ENCODE measurements at regions of chr11 and their contacts with region 1.

Region 1: DNA sequence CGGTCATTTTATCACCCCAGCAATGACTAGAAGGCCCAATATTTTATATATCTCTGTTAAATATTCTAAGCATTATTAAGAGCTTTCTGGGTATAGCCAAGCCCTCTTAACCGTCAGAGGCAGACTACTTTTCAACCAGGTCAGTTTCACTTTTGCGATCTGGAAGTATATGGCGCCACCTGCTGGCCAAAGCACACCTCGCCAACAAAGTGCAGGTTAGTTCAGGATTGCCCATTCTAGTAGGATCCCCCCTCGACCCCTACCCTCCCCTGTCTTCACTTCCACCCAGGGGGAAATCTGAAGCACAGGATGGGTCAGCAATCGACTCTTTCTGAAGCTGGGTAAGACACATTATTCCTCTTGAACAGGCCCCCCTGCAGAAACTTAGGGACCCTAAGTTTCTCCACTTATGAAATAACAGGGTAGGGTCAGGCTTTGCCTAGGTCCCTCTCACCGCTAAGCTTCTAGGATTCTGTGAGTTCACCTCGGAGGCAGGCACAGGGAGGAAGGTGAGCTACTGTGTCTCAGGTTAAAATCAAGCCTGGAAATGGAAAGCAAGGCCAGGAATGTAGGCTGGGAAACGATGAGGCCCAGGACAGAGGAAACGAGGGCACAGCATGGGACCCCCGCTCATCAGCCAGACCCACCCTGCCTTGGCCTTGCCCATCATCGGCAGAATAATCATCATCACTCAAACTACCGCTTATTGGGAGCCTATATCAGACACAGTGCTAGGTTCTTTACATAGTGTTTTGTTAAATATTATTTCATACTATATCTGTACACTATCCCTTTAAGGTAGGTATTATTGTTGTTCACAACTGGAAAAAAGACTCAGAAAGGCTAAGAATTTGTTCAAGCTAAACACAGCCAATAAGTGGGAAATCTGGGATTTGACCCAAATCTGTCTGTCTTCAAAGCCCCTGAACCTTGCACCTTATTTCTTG is 35.6 kb downstream of the KCNJ1 start:
- DNase-seq: peak; percentile 66 to 91
- H3K4me3 ChIP-seq: no peak overlapping the region
- H3K27ac ChIP-seq: no peak overlapping the region
- H3K4me1 ChIP-seq: no peaks in the 10 kb centered on the region
- H3K27me3 ChIP-seq: peaks cover 0 to 3% (median 0%) of the 10 kb centered on the region in 4 experiments; a peak in 3 of 7 replicates
- CTCF ChIP-seq: peak; percentile 86 to 92 (median 88)
- EP300 ChIP-seq: no peak
- POLR2A ChIP-seq: no peak
- RAD21 ChIP-seq: peak; percentile 94 to 97

Region 2: DNA sequence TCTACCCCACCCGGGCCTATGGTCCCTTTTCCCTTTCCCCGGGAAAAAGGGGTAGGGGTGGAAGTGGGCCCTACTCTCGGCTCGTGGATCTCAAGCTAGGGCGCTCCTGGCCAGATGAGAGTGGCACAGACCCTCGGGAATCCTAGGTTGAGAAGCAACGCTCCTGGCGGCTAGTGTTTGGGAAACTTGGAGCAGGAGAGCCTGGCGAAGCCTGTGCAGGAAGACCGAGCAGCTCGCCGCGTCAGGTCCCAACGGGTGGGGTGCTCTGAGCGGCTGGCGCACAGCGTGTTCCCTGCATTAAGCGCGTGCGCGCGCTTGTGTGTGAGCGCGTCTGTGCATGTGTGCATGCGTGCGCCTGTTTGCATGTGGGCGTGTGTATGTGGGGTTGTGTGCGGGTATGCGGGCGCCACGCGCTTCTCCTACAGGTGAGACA is 144.7 kb before region 1 on chr11:
- CTCF ChIA-PET with region 1: interaction called, 14 read pairs
- POLR2A ChIA-PET with region 1: no interaction called
- DNase-seq: peak in 1 of 2 experiments; percentile 71
- H3K4me3 ChIP-seq: peak overlapping the region; percentile 20 to 60 (median 42); a peak in 7 of 8 replicates
- H3K27ac ChIP-seq: no peak overlapping the region
- H3K4me1 ChIP-seq: peaks cover 12 to 50% (median 31%) of the 10 kb centered on the region in 4 experiments
- H3K27me3 ChIP-seq: peaks cover 81 to 100% (median 98%) of the 10 kb centered on the region in 4 experiments
- CTCF ChIP-seq: no peak
- EP300 ChIP-seq: no peak
- POLR2A ChIP-seq: no peak
- RAD21 ChIP-seq: no peak

Region 3: GRCh38 chr11:128802358-128802981 is 29.0 kb before region 1 on chr11:
- CTCF ChIA-PET with region 1: interaction called, 17 read pairs
- POLR2A ChIA-PET with region 1: no interaction called
- DNase-seq: peak in 1 of 2 experiments; percentile 67
- H3K4me3 ChIP-seq: no peak overlapping the region
- H3K27ac ChIP-seq: no peak overlapping the region
- H3K4me1 ChIP-seq: no peaks in the 10 kb centered on the region
- H3K27me3 ChIP-seq: no peaks in the 10 kb centered on the region
- CTCF ChIP-seq: peak; percentile 57 to 83 (median 77)
- EP300 ChIP-seq: no peak
- POLR2A ChIP-seq: no peak
- RAD21 ChIP-seq: peak; percentile 59 to 78

Region 4: GRCh38 chr11:128814856-128815705 is 16.4 kb before region 1 on chr11:
- CTCF ChIA-PET with region 1: interaction called, 19 read pairs
- POLR2A ChIA-PET with region 1: no interaction called
- DNase-seq: peak; percentile 47 to 83
- H3K4me3 ChIP-seq: peak overlapping the region in 3 of 4 experiments; percentile 9 to 43 (median 16); a peak in 5 of 8 replicates
- H3K27ac ChIP-seq: no peak overlapping the region
- H3K4me1 ChIP-seq: peaks cover 6 to 19% (median 8%) of the 10 kb centered on the region in 4 experiments; a peak in 5 of 7 replicates
- H3K27me3 ChIP-seq: no peaks in the 10 kb centered on the region
- CTCF ChIP-seq: no peak
- EP300 ChIP-seq: no peak
- POLR2A ChIP-seq: no peak
- RAD21 ChIP-seq: no peak

Region 5: GRCh38 chr11:128859563-128860441 is 28.4 kb after region 1 on chr11:
- CTCF ChIA-PET with region 1: interaction called, 15 read pairs
- POLR2A ChIA-PET with region 1: no interaction called
- DNase-seq: peak; percentile 75 to 99
- H3K4me3 ChIP-seq: no peak overlapping the region
- H3K27ac ChIP-seq: no peak overlapping the region
- H3K4me1 ChIP-seq: peaks cover 0 to 6% (median 2%) of the 10 kb centered on the region in 4 experiments; a peak in 6 of 7 replicates
- H3K27me3 ChIP-seq: peaks cover 0 to 8% (median 0%) of the 10 kb centered on the region in 4 experiments; a peak in 3 of 7 replicates
- CTCF ChIP-seq: peak; percentile 93 to 97 (median 95)
- EP300 ChIP-seq: no peak
- POLR2A ChIP-seq: no peak
- RAD21 ChIP-seq: peak; percentile 70 to 83

Measured in H1 (cell line).